Spleen (tissue), 13 donors: ENCODE measurements at regions of chr18 and their contacts with region 1.

Region 1: DNA sequence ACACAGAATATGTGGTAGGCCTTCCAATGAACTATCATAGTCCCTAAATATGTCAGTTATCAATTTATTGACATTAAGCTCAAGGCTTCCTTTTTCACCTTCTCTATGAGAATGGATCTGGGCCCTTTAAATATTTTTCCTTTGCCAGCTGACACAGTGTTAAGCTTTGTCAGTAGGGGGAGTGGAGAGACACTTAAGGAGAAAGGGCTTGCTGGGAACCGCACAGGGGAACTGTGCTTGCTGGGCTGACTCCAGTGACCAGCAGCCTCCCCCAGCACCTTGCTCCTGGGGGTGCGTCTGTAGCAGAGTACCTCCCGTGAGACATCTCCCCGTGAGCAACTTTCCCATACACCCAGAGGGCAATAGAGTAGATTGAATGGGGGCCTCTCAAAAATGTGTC is 6.5 kb upstream of the PTPN2 start:
- DNase-seq: no peak
- H3K4me3 ChIP-seq: no peak overlapping the region
- H3K27ac ChIP-seq: no peak overlapping the region
- H3K4me1 ChIP-seq: peaks cover 2 to 26% (median 12%) of the 10 kb centered on the region in 6 donors
- H3K27me3 ChIP-seq: peaks cover 0 to 10% (median 0%) of the 10 kb centered on the region in 7 donors
- CTCF ChIP-seq: no peak
- POLR2A ChIP-seq: no peak

Region 2: GRCh38 chr18:12597775-12598174 is 292.7 kb before region 1 on chr18:
- intact Hi-C with region 1: no loop called
- DNase-seq: no peak
- H3K4me3 ChIP-seq: no peak overlapping the region
- H3K27ac ChIP-seq: peak overlapping the region in 2 of 8 donors; percentile 11 to 41
- H3K4me1 ChIP-seq: peaks cover 0 to 45% (median 10%) of the 10 kb centered on the region in 6 donors
- H3K27me3 ChIP-seq: no peaks in the 10 kb centered on the region
- CTCF ChIP-seq: no peak
- POLR2A ChIP-seq: no peak

Region 3: DNA sequence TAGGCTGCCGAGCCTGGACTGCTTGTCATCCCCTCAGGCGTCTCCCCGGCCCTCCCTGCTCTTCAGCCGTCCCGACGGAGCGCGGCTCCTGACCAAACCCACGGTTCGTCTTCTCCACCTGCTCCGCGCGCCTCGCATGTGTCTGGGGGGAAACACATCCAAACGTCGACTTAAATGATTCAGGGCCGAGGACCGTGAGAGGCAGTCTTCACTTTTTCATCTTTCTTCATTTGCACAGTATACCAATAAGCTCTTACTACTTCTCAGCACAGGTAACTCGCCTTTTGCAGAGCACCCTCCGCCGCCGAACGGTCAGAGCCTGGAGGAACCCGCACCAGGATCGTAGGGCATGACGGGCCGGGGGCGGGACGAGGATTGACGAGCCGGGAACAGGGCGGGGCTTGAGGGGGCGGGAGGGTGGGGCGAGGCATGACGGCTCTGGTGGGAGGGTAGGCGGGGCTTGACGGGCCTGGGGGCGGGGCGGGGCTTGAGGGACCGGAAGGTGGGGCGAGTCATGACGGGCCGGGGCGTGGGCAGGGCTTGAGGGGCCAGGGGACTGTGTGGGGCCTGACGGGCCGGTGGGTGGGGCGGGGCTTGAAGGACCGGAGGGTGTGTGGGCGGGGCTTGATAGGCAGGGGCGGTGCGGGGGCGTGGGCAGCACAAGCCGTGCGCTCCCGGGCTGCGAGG is 57.0 kb after region 1 on chr18 and contains the start of gene SEH1L:
- intact Hi-C with region 1: loop called (anchors 10 kb)
- DNase-seq: peak; percentile 100
- H3K4me3 ChIP-seq: peak within 1 kb of the TSS; percentile 57 to 89 (median 70)
- H3K27ac ChIP-seq: peak within 1 kb of the TSS; percentile 92 to 99 (median 95)
- H3K4me1 ChIP-seq: peaks cover 4 to 59% (median 46%) of the 10 kb centered on the region in 6 donors
- H3K27me3 ChIP-seq: no peaks in the 10 kb centered on the region
- CTCF ChIP-seq: peak in 1 of 11 experiments; percentile 20
- POLR2A ChIP-seq: peak in 1 of 3 donors; percentile 47
- total RNA-seq, gene SEH1L: 27.3 to 52.9 (median 34.8) TPM